ENCODE measurements at regions of chr3 and their contacts with region 1.

Region 1: DNA sequence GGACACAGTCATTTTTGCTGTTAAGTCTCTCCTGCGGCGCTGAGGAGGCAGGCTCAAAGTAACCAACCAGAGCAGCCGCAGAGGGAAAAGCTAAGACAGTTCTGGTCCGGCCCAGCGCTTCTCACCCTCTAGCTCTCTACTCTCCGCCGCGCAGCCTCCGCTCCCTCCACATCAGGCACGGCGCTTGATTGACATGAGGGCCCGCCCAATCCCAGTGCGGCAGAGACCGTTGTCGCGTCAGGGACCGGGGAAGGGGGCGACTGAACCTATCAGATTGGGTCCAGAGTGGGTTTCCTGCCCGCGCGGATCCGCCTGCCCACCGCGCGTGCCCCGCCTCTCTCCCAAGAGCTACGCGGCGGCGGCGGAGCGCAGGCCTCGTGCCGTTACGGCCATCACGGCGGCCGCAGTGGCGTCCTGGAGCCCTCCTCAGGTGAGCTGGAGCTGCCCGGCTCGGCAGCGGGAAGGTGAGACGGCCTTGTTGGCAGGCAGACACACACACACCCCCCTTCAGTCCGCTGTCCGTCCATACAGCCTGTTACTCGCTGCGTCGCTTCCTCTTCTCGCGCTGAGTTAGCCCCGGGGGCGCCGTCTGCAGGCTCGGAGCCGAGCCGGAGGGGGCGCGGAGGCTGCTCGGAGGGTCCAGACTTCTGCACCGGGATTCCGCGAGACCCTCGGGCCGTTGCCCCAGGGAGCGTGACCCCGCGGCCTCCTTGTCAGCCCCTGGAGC is at the start of gene NCK1:
- DNase-seq: peak; percentile 98
- H3K4me3 Mint-ChIP-seq: peak within 1 kb of the TSS; percentile 95
- H3K27ac Mint-ChIP-seq: peak within 1 kb of the TSS; percentile 98
- H3K4me1 Mint-ChIP-seq: peaks cover 41% of the 10 kb centered on the region
- H3K27me3 Mint-ChIP-seq: no peaks in the 10 kb centered on the region
- total RNA-seq, gene NCK1: 40.2 and 41.9 TPM in 2 replicates

Region 2: DNA sequence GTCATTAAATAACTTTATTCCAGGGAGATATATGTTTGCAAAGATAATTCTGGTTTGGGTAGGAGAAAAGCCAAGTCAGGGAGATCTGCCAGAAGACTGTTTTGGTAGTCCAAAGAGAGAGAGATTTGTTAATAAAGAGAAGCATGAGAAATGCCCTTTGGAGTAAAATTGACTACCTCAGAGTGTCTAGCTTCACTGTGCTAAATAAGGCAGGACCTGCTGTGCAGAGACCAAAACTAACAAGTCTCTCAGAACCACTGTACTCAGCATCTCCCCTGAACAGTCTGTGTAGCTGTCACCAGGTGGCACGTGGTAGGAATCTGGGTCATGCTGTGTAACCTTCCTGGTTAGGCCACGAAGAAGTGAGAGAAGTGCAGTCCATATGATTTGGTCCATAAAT is 74.7 kb before region 1 on chr3:
- intact Hi-C with region 1: no loop called
- DNase-seq: no peak
- H3K4me3 Mint-ChIP-seq: no peak overlapping the region
- H3K27ac Mint-ChIP-seq: peak overlapping the region; percentile 51
- H3K4me1 Mint-ChIP-seq: peaks cover 14% of the 10 kb centered on the region
- H3K27me3 Mint-ChIP-seq: peaks cover 8% of the 10 kb centered on the region

Region 3: GRCh38 chr3:136818769-136819391 is 43.2 kb before region 1 on chr3 and contains the start of gene SLC35G2:
- intact Hi-C with region 1: loop called (anchors 1 kb)
- DNase-seq: no peak
- H3K4me3 Mint-ChIP-seq: peak within 1 kb of the TSS; percentile 85
- H3K27ac Mint-ChIP-seq: peak within 1 kb of the TSS; percentile 83
- H3K4me1 Mint-ChIP-seq: peaks cover 23% of the 10 kb centered on the region
- H3K27me3 Mint-ChIP-seq: peaks cover 31% of the 10 kb centered on the region
- total RNA-seq, gene SLC35G2: 7.3 and 7.7 TPM in 2 replicates

Region 4: GRCh38 chr3:136831461-136831860 is 30.6 kb before region 1 on chr3:
- intact Hi-C with region 1: no loop called
- DNase-seq: no peak
- H3K4me3 Mint-ChIP-seq: no peak overlapping the region
- H3K27ac Mint-ChIP-seq: no peak overlapping the region
- H3K4me1 Mint-ChIP-seq: peaks cover 12% of the 10 kb centered on the region
- H3K27me3 Mint-ChIP-seq: peaks cover 7% of the 10 kb centered on the region

Region 5: GRCh38 chr3:136899622-136900158 is 37.6 kb after region 1 on chr3:
- intact Hi-C with region 1: loop called (anchors 5 kb)
- DNase-seq: no peak
- H3K4me3 Mint-ChIP-seq: no peak overlapping the region
- H3K27ac Mint-ChIP-seq: peak overlapping the region; percentile 47
- H3K4me1 Mint-ChIP-seq: peaks cover 40% of the 10 kb centered on the region
- H3K27me3 Mint-ChIP-seq: no peaks in the 10 kb centered on the region

Region 6: GRCh38 chr3:136932523-136932922 is 70.5 kb after region 1 on chr3:
- intact Hi-C with region 1: loop called (anchors 2 kb)
- DNase-seq: no peak
- H3K4me3 Mint-ChIP-seq: no peak overlapping the region
- H3K27ac Mint-ChIP-seq: peak overlapping the region; percentile 56
- H3K4me1 Mint-ChIP-seq: peaks cover 34% of the 10 kb centered on the region
- H3K27me3 Mint-ChIP-seq: no peaks in the 10 kb centered on the region

Region 7: DNA sequence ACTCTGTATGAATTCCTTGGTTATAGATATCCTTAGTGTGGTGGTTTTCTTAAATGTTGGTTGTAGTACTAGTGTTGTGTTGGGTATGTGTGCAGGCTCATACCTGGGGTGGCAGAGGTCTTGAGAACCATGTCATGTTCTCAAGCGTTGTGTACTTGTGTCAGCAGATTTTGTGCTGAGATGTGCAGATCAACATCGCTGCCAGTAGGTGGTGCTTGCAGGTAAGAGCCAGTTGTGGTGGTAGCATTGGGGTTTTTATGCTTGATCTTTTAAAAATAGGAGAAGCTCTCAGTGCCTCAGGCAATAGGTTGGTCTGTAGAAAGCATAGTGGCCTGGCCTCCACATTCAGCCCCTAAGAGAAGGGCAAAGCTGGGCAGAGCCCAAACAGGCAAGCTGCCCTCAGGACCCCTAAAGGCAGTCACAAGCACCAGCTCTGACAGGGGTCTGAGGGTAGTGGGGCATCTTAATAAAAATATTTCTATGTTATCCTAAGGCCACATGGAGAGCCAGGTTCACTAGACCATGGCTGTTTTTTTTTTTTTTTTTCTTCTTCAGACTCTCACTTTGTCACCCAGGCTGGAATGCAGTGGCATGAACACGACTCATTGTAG is 259.8 kb after region 1 on chr3:
- intact Hi-C with region 1: no loop called
- DNase-seq: no peak
- H3K4me3 Mint-ChIP-seq: no peak overlapping the region
- H3K27ac Mint-ChIP-seq: no peak overlapping the region
- H3K4me1 Mint-ChIP-seq: no peaks in the 10 kb centered on the region
- H3K27me3 Mint-ChIP-seq: peaks cover 6% of the 10 kb centered on the region

Region 8: DNA sequence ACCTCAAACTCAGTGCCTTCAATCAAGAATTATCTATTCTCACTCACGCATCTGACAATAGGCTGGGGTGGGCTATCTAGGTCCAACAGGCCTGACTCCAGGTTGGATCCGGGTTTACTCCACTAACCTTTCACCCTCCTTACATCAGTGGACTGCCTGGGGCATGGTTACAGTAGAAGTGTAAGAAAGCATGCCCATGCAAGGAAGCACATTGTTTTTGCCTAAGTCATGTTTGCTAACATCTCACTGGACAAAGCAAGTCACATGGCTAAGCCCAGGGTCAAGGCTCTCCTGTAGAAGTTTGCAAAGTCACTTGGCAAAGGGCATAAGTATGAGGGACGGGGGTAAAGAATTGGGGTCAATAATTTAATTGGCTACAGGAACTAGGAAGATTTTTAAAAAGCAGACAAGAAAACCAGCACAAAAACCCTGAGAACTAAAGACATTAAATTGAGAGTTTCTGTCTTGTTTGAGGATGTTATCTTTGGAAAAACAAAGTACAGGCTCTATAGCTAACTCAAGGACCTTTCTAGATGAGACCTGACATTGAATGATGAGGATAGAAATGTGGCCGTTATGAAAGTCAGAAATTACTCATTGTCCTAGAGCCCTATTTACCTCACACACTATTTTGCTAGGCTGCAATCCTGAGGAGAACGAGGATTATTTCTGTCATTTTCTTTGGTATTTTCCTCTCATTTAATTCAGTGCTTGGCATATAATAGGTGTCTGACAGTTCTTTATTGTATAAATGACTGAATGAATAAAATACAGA is 310.0 kb after region 1 on chr3:
- intact Hi-C with region 1: no loop called
- DNase-seq: no peak
- H3K4me3 Mint-ChIP-seq: no peak overlapping the region
- H3K27ac Mint-ChIP-seq: no peak overlapping the region
- H3K4me1 Mint-ChIP-seq: no peaks in the 10 kb centered on the region
- H3K27me3 Mint-ChIP-seq: no peaks in the 10 kb centered on the region

Measured in activated T-helper 2 cell treated with anti-CD3 and anti-CD28 coated beads, Interferon-gamma antibody, Interleukin-2, Interleukin-4, amounts not matched to agents 10 μg/mL and 5 μg/mL and 100 μg/mL, durations not matched to agents 14 hours and 24 hours and 36 hours (primary cell).